Common myeloid progenitor, CD34-positive (primary cell): ENCODE measurements at regions of chrX and their contacts with region 1.

Region 1: DNA sequence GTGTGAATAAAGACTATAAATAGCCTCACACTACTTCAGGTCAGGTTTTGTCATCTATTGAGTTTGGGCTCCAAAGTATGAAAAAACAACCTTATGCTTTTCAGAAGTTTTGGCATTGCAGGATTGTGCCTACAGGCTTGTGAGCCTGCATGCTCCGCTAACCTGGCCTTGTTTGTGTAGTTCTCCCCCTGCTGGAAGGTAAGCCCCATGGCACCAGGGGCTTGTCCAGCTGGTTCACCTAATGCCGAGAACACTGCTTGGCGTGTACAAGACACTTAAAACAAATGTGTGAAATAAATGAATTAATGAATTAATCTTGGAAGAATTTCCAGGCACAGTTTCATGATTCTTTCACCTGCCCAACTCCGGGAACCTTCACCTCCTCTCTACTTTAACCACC is 1.8 kb upstream of the HSD17B10 start:
- DNase-seq: peak; percentile 69 to 90 (median 89)
- H3K4me3 ChIP-seq: no peak overlapping the region
- H3K27ac ChIP-seq: no peak overlapping the region
- H3K4me1 ChIP-seq: peaks cover 4 to 23% (median 10%) of the 10 kb centered on the region in 4 experiments
- H3K27me3 ChIP-seq: peaks cover 0 to 42% (median 3%) of the 10 kb centered on the region in 5 experiments

Region 2: GRCh38 chrX:53422086-53422860 is 13.7 kb before region 1 on chrX and contains the start of gene SMC1A:
- CTCF ChIA-PET with region 1: interaction called, 10 read pairs
- POLR2A ChIA-PET with region 1: interaction called, 3 read pairs
- DNase-seq: peak; percentile 97 to 100 (median 100)
- H3K4me3 ChIP-seq: peak within 1 kb of the TSS; percentile 61 to 95 (median 89)
- H3K27ac ChIP-seq: peak within 1 kb of the TSS; percentile 93 to 96
- H3K4me1 ChIP-seq: peaks cover 6 to 21% (median 17%) of the 10 kb centered on the region in 4 experiments
- H3K27me3 ChIP-seq: peaks cover 0 to 2% (median 0%) of the 10 kb centered on the region in 5 experiments